ENCODE measurements at regions of chr5 and their contacts with region 1.

Region 1: GRCh38 chr5:168219515-168220410 is 71.7 kb upstream of the WWC1 start:
- DNase-seq: peak; percentile 60
- ATAC-seq: peak; percentile 84
- H3K4me3 ChIP-seq: no peak overlapping the region
- H3K27ac ChIP-seq: no peak overlapping the region
- H3K4me1 ChIP-seq: no peaks in the 10 kb centered on the region
- H3K27me3 ChIP-seq: peaks cover 2 to 9% of the 10 kb centered on the region in 2 experiments; a peak in 2 of 5 replicates
- CTCF ChIP-seq: peak; percentile 84
- EP300 ChIP-seq: no peak
- POLR2A ChIP-seq: no peak
- RAD21 ChIP-seq: peak; percentile 54; the same call in 1 of the 2 replicates

Region 2: GRCh38 chr5:167261309-167262100 is 958.3 kb before region 1 on chr5:
- CTCF ChIA-PET with region 1: no interaction called
- POLR2A ChIA-PET with region 1: no interaction called
- in situ Hi-C with region 1: no loop called
- intact Hi-C with region 1: loop called (anchors 5 kb)
- DNase-seq: no peak
- ATAC-seq: no peak
- H3K4me3 ChIP-seq: no peak overlapping the region
- H3K27ac ChIP-seq: no peak overlapping the region
- H3K4me1 ChIP-seq: no peaks in the 10 kb centered on the region
- H3K27me3 ChIP-seq: no peaks in the 10 kb centered on the region; a peak in 1 of 5 replicates
- CTCF ChIP-seq: no peak
- EP300 ChIP-seq: no peak
- POLR2A ChIP-seq: no peak
- RAD21 ChIP-seq: no peak

Region 3: GRCh38 chr5:167934551-167934971 is 285.2 kb before region 1 on chr5:
- CTCF ChIA-PET with region 1: no interaction called
- POLR2A ChIA-PET with region 1: no interaction called
- in situ Hi-C with region 1: no loop called
- intact Hi-C with region 1: no loop called
- DNase-seq: no peak
- ATAC-seq: no peak
- H3K4me3 ChIP-seq: no peak overlapping the region
- H3K27ac ChIP-seq: no peak overlapping the region
- H3K4me1 ChIP-seq: no peaks in the 10 kb centered on the region
- H3K27me3 ChIP-seq: peaks cover 0 to 15% of the 10 kb centered on the region in 2 experiments; a peak in 2 of 5 replicates
- CTCF ChIP-seq: no peak
- EP300 ChIP-seq: no peak
- POLR2A ChIP-seq: no peak
- RAD21 ChIP-seq: no peak

Region 4: DNA sequence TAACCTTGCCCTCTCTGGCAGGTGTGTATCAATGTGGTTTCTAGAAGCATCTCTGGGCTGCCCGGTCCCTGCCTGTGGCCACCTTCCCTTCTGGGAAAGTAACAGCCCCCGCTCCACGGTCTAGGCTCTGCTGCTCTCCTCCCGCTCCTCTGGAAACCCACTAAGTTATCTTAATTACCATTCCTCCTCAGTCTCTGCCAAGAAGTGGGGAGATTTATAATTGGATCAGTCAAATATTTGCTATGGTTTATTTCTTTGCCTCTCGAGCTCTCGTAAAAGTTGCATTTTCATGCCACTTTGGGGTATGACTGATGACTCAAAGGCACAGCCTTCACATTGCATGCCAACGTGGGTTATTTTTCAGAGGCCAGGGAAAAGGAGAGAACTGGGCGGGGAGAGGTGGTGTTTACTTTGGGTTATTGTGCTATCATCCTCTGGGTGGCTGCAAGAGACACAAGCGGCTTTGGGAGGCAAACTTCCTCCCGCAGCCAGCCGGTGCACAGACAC is 133.6 kb before region 1 on chr5:
- CTCF ChIA-PET with region 1: no interaction called
- POLR2A ChIA-PET with region 1: no interaction called
- in situ Hi-C with region 1: no loop called
- intact Hi-C with region 1: no loop called
- DNase-seq: peak; percentile 16
- ATAC-seq: peak; percentile 99
- H3K4me3 ChIP-seq: no peak overlapping the region
- H3K27ac ChIP-seq: no peak overlapping the region
- H3K4me1 ChIP-seq: no peaks in the 10 kb centered on the region
- H3K27me3 ChIP-seq: no peaks in the 10 kb centered on the region
- CTCF ChIP-seq: peak; percentile 22; the same call in 1 of the 2 replicates
- EP300 ChIP-seq: no peak
- POLR2A ChIP-seq: no peak
- RAD21 ChIP-seq: no peak

Region 5: DNA sequence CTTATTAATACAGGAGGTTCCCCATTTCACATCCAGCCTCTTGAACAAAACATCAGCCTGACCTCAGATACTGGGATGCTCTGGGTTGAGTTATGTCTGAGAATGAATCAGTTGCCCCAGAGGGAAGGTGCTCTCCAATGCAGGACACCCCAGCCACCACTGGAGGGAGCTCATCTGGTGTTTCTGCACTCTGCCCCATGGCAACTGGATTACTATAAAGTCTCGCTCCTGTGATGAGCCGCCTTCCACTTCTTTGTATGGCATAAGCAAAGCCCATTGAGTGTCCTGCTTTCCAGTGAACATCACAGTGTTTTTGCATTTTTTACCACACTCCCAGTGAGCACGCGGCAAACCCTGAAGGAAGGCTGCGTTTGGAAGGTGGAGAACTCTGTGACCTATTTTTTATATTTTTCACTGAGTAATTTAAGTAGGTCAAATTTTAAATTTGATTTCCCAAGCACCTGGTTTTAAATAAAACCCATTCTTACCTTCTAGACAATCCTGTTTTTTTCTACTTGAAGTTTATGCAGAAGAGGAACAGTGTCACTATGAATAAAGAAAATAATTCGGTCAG is 105.2 kb before region 1 on chr5:
- CTCF ChIA-PET with region 1: interaction called, 23 read pairs
- POLR2A ChIA-PET with region 1: no interaction called
- in situ Hi-C with region 1: loop called (anchors 5 kb)
- intact Hi-C with region 1: loop called (anchors 1 kb)
- DNase-seq: peak; percentile 44
- ATAC-seq: peak; percentile 96
- H3K4me3 ChIP-seq: no peak overlapping the region
- H3K27ac ChIP-seq: no peak overlapping the region
- H3K4me1 ChIP-seq: no peaks in the 10 kb centered on the region; the same call in 1 of the 2 replicates
- H3K27me3 ChIP-seq: no peaks in the 10 kb centered on the region; a peak in 1 of 5 replicates
- CTCF ChIP-seq: peak; percentile 82
- EP300 ChIP-seq: no peak
- POLR2A ChIP-seq: no peak
- RAD21 ChIP-seq: 0 out of 2 replicates have a peak, but pooled peaks have one; percentile 41

Region 6: DNA sequence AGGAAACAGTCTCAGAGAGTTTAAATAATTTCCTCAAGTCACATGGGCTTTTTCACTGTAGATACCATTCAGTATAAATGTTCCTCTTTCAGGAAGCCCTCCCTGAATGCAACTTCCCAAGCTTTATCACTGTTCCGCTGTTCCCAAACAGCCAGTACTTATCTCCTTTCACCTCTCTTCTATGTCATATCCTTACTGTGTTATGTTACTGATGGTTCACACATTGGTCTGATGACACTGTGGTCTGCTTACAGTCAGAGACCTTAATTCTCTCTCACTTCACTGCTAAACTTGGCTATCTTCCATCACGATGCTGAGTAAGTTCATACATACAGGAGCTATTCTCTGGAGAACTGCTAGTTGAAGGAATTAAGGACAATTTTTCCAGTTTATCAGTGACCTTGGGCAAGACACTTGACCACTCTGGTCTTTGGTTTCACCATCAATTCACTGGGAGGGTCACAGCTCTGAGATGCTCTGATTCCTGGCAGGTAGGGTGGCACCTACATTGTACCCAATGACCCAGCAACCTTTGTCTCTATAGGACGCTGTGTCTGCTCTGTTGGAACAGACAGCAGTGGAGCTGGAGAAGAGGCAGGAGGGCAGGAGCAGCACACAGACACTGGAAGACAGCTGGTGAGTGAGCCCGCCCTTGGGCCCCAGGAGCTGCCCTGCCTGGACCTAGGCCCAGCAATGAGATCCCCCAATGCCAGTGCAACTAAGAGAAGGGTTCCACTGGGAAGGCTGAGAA is 224.4 kb after region 1 on chr5:
- CTCF ChIA-PET with region 1: no interaction called
- POLR2A ChIA-PET with region 1: no interaction called
- in situ Hi-C with region 1: no loop called
- intact Hi-C with region 1: no loop called
- DNase-seq: no peak
- ATAC-seq: no peak
- H3K4me3 ChIP-seq: no peak overlapping the region
- H3K27ac ChIP-seq: no peak overlapping the region
- H3K4me1 ChIP-seq: no peaks in the 10 kb centered on the region
- H3K27me3 ChIP-seq: no peaks in the 10 kb centered on the region; a peak in 1 of 5 replicates
- CTCF ChIP-seq: no peak
- EP300 ChIP-seq: no peak
- POLR2A ChIP-seq: no peak
- RAD21 ChIP-seq: no peak

Region 7: DNA sequence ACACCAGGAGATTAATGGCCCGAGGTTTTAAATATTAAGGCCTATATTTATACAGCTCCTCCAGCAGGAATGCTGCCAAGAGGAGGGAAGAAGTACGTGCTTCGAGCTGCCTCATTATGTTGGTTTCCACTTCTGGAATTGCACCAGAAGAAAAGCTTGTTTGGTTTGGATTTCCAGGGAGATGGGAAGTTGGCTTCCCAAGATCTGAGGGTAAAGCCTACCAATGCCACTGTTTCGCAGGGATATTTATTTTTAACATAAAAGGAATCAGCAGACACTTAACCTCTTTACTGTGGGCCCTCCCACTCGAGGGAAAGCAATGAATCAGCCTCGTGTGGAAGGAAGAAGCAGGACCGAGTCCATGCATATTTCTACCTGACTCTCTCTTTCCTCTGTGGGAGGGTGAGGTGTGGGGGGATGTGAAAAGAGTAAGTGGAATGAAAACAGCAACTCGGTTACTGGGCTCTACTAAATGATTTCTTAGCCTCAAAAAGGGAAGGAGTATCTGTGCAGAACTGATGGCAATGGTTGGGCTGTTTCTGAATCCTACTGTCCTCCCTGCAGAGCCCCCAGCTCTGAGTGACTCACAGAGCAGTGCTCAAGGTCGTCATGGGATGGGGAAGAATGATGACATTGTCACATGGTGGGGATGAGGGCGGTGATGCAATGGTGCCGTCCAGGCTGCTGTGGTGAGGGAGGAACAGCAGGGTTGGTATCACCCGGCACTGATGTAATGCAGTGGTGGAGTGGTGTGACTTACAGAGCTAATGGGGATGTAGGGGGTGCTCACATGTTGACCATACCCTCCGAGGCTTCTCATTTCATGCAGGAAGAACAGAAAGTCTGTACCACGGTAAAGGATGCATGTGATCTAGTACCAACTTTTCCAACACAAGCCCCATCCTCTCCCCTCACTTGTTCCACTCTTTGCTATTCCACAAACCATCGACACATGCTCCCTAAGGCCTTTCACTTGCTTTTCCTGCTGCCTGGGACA is 574.4 kb after region 1 on chr5:
- CTCF ChIA-PET with region 1: no interaction called
- POLR2A ChIA-PET with region 1: no interaction called
- in situ Hi-C with region 1: no loop called
- intact Hi-C with region 1: no loop called
- DNase-seq: peak; percentile 33
- ATAC-seq: peak; percentile 50
- H3K4me3 ChIP-seq: no peak overlapping the region
- H3K27ac ChIP-seq: no peak overlapping the region
- H3K4me1 ChIP-seq: no peaks in the 10 kb centered on the region
- H3K27me3 ChIP-seq: peaks cover 2 to 64% of the 10 kb centered on the region in 2 experiments; a peak in 4 of 5 replicates
- CTCF ChIP-seq: no peak
- EP300 ChIP-seq: no peak
- POLR2A ChIP-seq: no peak
- RAD21 ChIP-seq: no peak

Measured in HepG2 (cell line).